Aorta (tissue), 5 donors: ENCODE measurements at regions of chr11 and their contacts with region 1.

Region 1: GRCh38 chr11:75399344-75400145 is at the start of gene RPS3:
- DNase-seq: peak; percentile 94 to 97
- ATAC-seq: peak; percentile 97
- H3K4me3 ChIP-seq: peak within 1 kb of the TSS; percentile 55 to 73
- H3K27ac ChIP-seq: peak within 1 kb of the TSS in 1 of 2 donors; percentile 93
- H3K4me1 ChIP-seq: no peaks in the 10 kb centered on the region
- H3K27me3 ChIP-seq: no peaks in the 10 kb centered on the region
- total RNA-seq, gene RPS3: 1,466 to 1,593 TPM

Region 2: DNA sequence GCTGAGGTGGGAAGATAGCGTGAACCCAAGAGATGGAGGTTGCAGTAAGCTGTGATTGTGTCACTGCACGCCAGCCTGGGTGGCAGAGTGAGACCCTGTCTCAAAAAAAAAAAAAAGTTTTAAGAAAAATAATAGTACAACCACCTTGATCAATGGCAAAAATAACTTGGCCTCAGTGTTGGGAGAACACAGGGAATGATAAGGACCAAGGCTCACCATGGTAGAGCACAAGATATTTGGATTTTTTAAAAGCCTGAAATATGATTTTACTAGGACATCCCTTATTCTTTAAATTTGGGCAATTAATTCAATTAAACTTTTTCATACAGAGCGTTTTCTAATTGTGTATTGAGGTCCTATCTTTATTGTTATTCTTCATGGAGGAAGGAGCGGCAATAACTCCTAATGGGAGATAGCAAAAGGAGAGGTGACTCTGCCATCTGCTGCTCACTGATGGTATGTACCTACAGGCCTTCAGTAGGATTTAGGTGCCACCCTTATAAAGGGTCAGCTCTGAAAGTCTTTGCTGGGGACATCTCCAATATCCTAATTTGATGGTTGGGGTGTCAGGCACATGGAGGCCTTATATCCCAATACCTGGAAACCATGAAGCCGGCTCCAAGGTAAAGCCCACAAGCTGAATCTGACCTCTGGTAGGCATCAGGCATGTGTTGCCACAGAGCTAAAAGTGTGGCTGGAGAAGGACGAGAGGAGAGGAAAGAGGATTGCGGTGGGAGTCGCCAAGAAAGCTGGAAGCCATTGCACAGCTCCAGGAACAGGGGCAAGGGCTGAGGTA is 829.1 kb before region 1 on chr11:
- intact Hi-C with region 1: no loop called
- DNase-seq: no peak
- ATAC-seq: no peak
- H3K4me3 ChIP-seq: no peak overlapping the region
- H3K27ac ChIP-seq: no peak overlapping the region
- H3K4me1 ChIP-seq: no peaks in the 10 kb centered on the region
- H3K27me3 ChIP-seq: no peaks in the 10 kb centered on the region

Region 3: DNA sequence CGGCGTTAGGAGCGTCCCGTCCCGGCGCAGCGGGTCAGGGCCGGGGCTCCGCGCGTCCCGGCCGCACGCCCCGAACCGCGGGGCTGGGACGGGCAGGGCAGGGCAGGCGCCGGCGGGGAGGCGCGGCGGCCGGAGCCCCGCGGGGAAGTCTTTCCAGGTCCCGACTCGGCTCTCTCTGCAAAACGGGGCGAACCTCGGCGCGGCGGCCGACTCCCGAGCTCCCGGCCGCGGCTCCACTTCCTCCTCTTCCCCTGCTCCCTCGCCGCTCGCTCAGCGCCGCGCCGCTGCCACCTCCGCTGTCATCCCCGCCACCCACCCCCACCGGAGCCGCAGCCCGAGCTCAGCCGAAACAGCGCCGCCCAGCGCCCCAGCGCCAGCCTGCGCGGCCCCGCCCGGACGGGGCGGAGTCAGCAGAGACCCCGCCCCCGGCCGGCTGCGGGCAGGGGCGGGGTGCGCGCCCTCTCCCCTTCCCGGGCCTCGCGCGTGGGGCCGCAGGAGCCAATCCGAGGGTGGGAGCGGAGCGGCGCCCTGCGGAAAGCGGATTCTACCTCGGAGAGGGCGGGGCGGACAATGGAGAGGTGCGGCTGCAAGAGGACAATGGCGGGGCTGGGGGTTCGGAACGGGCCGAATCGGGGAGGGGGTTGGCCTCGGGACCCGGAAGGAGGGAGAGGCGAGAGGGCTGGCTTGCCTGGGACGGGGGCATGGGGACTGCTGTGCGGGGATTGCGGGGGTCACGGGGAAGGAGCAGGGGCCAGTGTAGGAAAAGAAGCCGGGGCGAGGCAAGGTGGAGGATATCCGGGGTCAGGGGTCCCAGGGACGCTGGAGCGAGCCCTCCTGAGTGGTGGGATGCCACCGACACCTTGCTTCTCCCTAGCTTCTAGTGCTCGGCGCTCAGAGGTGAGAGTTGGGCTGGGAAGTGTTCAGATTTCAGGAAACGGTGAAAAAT is 126.3 kb after region 1 on chr11 and contains the start of gene GDPD5:
- intact Hi-C with region 1: loop called in 1 of 2 experiments (anchors 5 kb)
- DNase-seq: peak; percentile 86 to 94
- ATAC-seq: peak; percentile 94
- H3K4me3 ChIP-seq: peak within 1 kb of the TSS; percentile 55 to 68
- H3K27ac ChIP-seq: no peak within 1 kb of the TSS
- H3K4me1 ChIP-seq: no peaks in the 10 kb centered on the region
- H3K27me3 ChIP-seq: no peaks in the 10 kb centered on the region
- total RNA-seq, gene GDPD5: 29.4 to 53.0 TPM